CD4-positive, alpha-beta T cell (primary cell): ENCODE measurements at regions of chr5 and their contacts with region 1.

Region 1: GRCh38 chr5:56316299-56316994 is 83.3 kb upstream of the ANKRD55 start:
- DNase-seq: peak in 2 of 14 experiments; percentile 13 to 30
- ATAC-seq: peak; percentile 72
- H3K4me3 ChIP-seq: no peak overlapping the region
- H3K4me3 Mint-ChIP-seq: peak overlapping the region; percentile 54
- H3K27ac ChIP-seq: peak overlapping the region in 1 of 2 donors; percentile 5
- H3K27ac Mint-ChIP-seq: peak overlapping the region; percentile 78
- H3K4me1 ChIP-seq: peaks cover 18% of the 10 kb centered on the region
- H3K4me1 Mint-ChIP-seq: peaks cover 37% of the 10 kb centered on the region
- H3K27me3 ChIP-seq: no peaks in the 10 kb centered on the region
- H3K27me3 Mint-ChIP-seq: no peaks in the 10 kb centered on the region
- CTCF ChIP-seq: no peak

Region 2: DNA sequence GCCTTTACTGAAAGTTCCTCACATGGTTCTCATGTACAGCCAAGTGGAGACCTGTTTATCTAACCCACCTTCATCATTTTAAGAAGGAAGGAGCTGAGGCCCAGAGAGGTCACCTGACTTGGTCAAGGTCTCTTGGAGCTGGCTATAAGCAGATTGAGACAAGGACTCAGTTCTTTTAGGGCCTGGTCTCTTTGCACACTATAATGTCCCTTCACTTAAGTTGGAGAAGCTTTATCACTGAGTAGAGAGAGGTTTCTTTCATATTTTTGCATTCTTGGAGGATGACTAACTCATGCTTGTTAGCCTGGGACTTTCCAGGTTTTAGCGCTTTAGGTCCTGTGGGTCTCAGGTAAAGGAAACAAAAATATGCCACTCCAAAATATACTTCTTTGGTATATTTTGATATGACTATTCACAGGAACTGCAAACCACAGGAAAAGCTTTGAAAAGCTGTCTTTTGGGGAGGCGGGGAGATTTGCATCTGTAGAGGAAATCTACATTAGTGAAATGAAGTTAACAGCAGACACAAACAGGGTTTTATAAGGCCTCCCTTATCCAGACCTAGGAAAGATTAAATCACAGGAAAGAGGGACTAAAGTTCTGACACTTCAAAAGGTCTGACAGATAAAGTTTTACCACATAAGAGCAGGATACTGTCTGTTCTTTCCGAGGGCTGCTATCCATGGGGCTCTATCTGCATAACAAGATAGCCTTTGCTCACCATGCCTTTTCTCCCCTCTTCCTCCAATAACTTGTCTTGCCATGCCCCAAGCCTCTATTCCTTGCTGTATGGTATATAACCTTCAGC is 12.5 kb after region 1 on chr5:
- CTCF ChIA-PET with region 1: no interaction called
- POLR2A ChIA-PET with region 1: interaction called, 20 read pairs
- intact Hi-C with region 1: no loop called
- DNase-seq: peak in 8 of 14 experiments; percentile 13 to 85 (median 40)
- ATAC-seq: peak; percentile 76
- H3K4me3 ChIP-seq: peak overlapping the region; percentile 3
- H3K4me3 Mint-ChIP-seq: peak overlapping the region; percentile 44
- H3K27ac ChIP-seq: peak overlapping the region; percentile 72 to 74
- H3K27ac Mint-ChIP-seq: peak overlapping the region; percentile 73
- H3K4me1 ChIP-seq: peaks cover 46% of the 10 kb centered on the region
- H3K4me1 Mint-ChIP-seq: peaks cover 69% of the 10 kb centered on the region
- H3K27me3 ChIP-seq: no peaks in the 10 kb centered on the region
- H3K27me3 Mint-ChIP-seq: no peaks in the 10 kb centered on the region
- CTCF ChIP-seq: no peak